ENCODE measurements at regions of chr17 and their contacts with region 1.

Region 1: DNA sequence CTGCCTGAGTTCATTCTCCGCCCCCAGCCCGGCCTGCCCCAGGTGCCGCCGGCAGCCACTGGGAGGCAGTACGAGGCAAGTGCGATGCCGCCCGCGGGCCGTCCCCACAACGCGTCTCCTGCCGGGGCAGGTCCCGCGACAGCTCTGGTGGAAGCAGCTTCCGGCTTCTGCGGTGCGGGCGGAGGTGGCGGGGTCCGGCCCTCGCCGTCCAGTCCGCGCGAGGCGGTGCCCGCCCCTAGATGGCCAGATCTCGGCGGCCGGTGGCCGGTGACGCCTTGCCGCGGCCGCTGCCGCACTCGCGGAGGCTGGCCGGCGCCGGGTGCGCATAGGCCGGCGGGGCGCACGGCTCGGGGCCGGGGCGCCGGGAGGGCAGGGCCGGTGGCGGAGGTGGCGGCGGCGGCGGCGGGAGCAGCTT is 1.8 kb downstream of the GJD3 start:
- DNase-seq: peak; percentile 70
- ATAC-seq: peak; percentile 71
- H3K4me3 ChIP-seq: peak overlapping the region; percentile 48
- H3K27ac ChIP-seq: no peak overlapping the region; the same call in 1 of the 2 replicates
- H3K4me1 ChIP-seq: peaks cover 4% of the 10 kb centered on the region; the same call in 1 of the 2 replicates
- H3K27me3 ChIP-seq: no peaks in the 10 kb centered on the region
- CTCF ChIP-seq: peak; percentile 77
- POLR2A ChIP-seq: peak; percentile 23; the same call in 1 of the 2 replicates
- RAD21 ChIP-seq: peak; percentile 68

Region 2: DNA sequence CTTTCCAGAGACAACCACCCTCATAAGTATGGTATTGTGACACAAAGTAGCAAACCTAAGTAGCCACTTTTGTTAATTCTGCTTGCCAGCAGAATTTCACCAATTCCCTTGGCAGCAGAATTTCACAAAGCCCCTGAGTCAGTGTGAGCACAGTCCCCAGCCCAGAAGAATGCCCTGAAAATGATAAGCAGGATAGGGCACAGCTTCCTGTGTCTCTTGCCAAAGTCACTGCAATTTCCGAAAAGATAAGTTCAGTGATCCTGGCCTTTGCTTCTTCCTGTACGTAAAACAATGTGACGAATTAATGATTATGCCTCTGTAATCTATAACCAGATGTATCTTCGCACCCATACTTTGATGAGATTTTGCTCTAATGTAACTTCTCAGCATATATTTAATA is 159.6 kb before region 1 on chr17:
- CTCF ChIA-PET with region 1: no interaction called
- POLR2A ChIA-PET with region 1: no interaction called
- dilution Hi-C with region 1: no loop called
- in situ Hi-C with region 1: no loop called
- intact Hi-C with region 1: loop called (anchors 5 kb)
- DNase-seq: no peak
- ATAC-seq: no peak
- H3K4me3 ChIP-seq: no peak overlapping the region
- H3K27ac ChIP-seq: no peak overlapping the region
- H3K4me1 ChIP-seq: peaks cover 3% of the 10 kb centered on the region
- H3K27me3 ChIP-seq: no peaks in the 10 kb centered on the region
- CTCF ChIP-seq: no peak
- POLR2A ChIP-seq: no peak
- RAD21 ChIP-seq: no peak

Region 3: DNA sequence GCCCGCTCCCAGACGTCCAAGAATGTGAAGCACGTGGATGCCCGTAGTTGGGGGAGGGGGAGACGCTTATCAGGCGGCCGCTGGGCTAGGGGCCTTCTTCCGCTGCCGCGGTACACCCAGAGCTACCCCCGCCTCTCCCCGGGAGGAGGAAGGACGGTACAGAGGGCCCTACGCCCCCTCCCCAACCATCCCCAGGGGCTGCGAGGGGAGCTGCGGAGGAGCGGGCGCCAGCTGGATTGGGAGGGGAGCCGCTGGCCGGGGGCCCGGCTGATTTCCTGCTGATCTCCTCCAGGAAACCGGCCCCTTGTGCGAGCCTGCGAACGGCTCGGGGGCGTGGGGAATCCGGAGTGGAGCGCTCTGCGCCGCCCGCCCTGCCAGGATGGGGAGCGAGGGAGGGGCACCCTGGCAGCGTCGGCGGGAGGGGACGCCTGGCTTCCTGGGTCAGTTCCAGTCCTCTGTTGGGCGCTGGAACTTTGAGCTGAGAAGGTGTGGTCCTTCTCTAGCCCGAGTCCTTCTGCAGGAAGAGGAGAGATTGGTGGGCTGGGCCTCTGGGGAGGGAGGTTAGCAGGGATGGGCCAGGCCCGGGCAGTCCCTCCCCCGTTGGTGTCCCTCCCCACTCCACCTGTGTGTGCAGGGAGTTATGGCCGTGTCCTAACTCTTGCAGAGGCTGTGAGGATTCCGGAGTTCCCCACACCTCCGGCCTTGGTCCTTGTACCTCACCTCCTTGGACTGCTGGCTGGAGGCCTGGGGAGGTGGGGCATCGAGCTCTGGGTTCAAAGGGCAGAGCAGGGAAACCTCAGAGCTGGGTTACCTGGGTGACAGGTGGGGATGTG is 17.3 kb before region 1 on chr17:
- CTCF ChIA-PET with region 1: no interaction called
- POLR2A ChIA-PET with region 1: no interaction called
- dilution Hi-C with region 1: no loop called
- in situ Hi-C with region 1: no loop called
- intact Hi-C with region 1: no loop called
- DNase-seq: peak; percentile 51
- ATAC-seq: peak; percentile 21
- H3K4me3 ChIP-seq: peak overlapping the region; percentile 82
- H3K27ac ChIP-seq: peak overlapping the region; percentile 87
- H3K4me1 ChIP-seq: peaks cover 61% of the 10 kb centered on the region
- H3K27me3 ChIP-seq: no peaks in the 10 kb centered on the region
- CTCF ChIP-seq: no peak
- POLR2A ChIP-seq: peak; percentile 63; the same call in 1 of the 2 replicates
- RAD21 ChIP-seq: no peak

Region 4: DNA sequence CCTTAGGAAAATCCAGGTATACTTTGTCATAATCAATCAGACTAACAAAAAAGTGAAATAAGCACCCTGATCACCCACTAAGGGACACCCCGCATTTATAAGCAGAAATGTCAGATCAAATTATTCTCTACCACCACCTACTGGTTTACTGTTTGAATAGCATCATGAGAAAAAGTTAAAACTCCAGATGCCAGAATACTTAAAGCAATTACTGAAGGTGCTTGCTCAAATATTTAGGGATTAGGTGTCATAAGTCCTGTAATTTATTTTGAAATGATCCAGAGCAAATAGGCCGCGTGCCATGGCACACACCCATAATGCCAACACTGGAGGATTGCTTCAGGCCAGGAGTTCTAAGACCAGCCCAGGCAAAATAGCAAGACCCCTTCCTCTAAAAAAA is 52.7 kb after region 1 on chr17:
- CTCF ChIA-PET with region 1: interaction called, 4 read pairs
- POLR2A ChIA-PET with region 1: no interaction called
- dilution Hi-C with region 1: no loop called
- in situ Hi-C with region 1: no loop called
- intact Hi-C with region 1: loop called (anchors 1 kb)
- DNase-seq: peak; percentile 59
- ATAC-seq: peak; percentile 25; the same call in 1 of the 2 replicates
- H3K4me3 ChIP-seq: no peak overlapping the region
- H3K27ac ChIP-seq: peak overlapping the region; percentile 39; the same call in 1 of the 2 replicates
- H3K4me1 ChIP-seq: no peaks in the 10 kb centered on the region
- H3K27me3 ChIP-seq: no peaks in the 10 kb centered on the region
- CTCF ChIP-seq: peak; percentile 68
- POLR2A ChIP-seq: no peak
- RAD21 ChIP-seq: peak; percentile 51

Region 5: DNA sequence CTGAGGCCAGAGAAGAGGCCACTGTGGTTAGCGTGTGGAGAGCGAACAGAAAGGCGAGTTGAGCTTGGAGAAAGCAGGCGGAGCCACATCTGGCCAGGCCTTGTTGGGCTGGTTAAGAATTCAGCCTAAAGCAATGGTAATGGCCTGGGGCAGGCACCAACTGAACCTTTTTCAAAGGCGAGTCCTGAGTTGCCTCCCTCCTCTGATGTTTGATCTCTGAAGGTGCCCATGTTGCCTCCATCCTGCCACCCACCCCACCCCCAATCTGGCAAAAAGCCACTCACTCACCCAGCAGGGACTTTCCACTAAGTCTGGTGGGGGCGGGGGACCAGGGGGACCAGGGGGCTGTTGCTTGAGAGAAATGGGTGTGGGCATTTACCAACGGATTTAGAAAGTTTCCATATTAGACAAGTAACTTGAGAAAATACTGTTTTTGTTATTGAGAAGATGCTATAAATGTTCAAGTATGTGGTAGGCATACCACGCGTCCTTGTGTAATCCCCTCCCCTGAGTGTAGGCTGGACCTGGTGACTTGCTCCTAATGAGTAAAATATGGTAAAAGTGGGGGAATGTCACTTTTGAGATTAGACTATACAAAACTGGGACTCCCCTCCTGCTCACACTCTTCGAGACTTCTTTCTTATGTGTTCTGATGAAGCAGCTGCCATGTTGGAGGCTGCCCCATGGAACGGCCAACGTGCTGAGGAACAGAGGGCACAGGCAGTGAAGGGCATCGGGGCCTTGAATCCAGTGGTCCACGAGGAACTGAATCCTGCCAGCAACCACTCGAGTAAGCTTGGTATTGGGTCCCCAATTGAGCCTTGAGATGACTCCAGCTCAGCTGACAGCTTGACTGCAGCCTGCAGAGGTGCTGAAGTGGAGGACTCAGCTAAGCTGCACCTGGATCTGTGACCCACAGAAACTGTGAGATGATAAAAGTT is 168.6 kb after region 1 on chr17:
- CTCF ChIA-PET with region 1: interaction called, 9 read pairs
- POLR2A ChIA-PET with region 1: interaction called, 5 read pairs
- dilution Hi-C with region 1: no loop called
- in situ Hi-C with region 1: loop called (anchors 5 kb)
- intact Hi-C with region 1: loop called (anchors 1 kb)
- DNase-seq: no peak
- ATAC-seq: no peak
- H3K4me3 ChIP-seq: no peak overlapping the region
- H3K27ac ChIP-seq: peak overlapping the region; percentile 21
- H3K4me1 ChIP-seq: peaks cover 37% of the 10 kb centered on the region
- H3K27me3 ChIP-seq: no peaks in the 10 kb centered on the region
- CTCF ChIP-seq: no peak
- POLR2A ChIP-seq: no peak
- RAD21 ChIP-seq: no peak

Region 6: GRCh38 chr17:40791787-40792436 is 429.2 kb after region 1 on chr17:
- CTCF ChIA-PET with region 1: no interaction called
- POLR2A ChIA-PET with region 1: no interaction called
- dilution Hi-C with region 1: no loop called
- in situ Hi-C with region 1: loop called (anchors 25 kb)
- intact Hi-C with region 1: loop called (anchors 10 kb)
- DNase-seq: peak; percentile 55
- ATAC-seq: peak; percentile 72
- H3K4me3 ChIP-seq: no peak overlapping the region
- H3K27ac ChIP-seq: no peak overlapping the region
- H3K4me1 ChIP-seq: no peaks in the 10 kb centered on the region
- H3K27me3 ChIP-seq: peaks cover 44% of the 10 kb centered on the region
- CTCF ChIP-seq: peak; percentile 71
- POLR2A ChIP-seq: no peak
- RAD21 ChIP-seq: peak; percentile 61